ENCODE measurements at regions of chr3 and their contacts with region 1.

Region 1: DNA sequence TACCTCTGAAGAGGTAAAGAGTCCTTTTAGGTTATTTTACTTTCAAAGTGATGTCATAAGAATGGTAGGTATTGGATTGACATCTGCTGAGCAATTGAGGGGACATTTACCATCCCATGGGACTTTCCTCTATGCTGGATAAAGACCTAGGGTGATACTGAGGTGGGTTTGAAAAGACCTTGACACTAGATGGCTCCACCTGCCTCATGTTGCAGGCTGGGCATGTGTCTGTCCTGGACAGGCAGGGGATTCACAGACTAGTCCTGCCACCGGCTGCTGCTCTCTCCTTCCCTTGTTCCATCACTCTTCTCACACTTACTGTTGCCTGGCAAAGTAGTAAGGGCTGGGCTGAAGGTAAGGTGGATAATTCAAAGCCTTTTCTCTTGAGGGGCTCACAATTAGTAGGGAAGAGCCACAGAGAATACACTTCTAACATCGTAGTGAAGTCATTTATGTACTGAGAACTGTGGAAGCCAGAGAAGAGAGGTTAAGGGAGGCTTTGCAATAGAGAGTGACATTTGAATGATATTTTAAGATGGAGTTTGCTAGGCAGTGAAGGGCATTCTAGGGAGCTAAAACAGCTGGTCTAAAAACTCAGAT is 27.7 kb downstream of the TRAK1 start:
- DNase-seq: peak in 1 of 2 experiments; percentile 19
- H3K4me3 ChIP-seq: no peak overlapping the region
- H3K27ac ChIP-seq: no peak overlapping the region
- H3K4me1 ChIP-seq: peaks cover 2 to 5% (median 4%) of the 10 kb centered on the region in 4 experiments; a peak in 6 of 7 replicates
- H3K27me3 ChIP-seq: no peaks in the 10 kb centered on the region
- CTCF ChIP-seq: peak; percentile 74 to 83 (median 78)
- EP300 ChIP-seq: no peak
- POLR2A ChIP-seq: no peak
- RAD21 ChIP-seq: peak; percentile 82 to 86

Region 2: DNA sequence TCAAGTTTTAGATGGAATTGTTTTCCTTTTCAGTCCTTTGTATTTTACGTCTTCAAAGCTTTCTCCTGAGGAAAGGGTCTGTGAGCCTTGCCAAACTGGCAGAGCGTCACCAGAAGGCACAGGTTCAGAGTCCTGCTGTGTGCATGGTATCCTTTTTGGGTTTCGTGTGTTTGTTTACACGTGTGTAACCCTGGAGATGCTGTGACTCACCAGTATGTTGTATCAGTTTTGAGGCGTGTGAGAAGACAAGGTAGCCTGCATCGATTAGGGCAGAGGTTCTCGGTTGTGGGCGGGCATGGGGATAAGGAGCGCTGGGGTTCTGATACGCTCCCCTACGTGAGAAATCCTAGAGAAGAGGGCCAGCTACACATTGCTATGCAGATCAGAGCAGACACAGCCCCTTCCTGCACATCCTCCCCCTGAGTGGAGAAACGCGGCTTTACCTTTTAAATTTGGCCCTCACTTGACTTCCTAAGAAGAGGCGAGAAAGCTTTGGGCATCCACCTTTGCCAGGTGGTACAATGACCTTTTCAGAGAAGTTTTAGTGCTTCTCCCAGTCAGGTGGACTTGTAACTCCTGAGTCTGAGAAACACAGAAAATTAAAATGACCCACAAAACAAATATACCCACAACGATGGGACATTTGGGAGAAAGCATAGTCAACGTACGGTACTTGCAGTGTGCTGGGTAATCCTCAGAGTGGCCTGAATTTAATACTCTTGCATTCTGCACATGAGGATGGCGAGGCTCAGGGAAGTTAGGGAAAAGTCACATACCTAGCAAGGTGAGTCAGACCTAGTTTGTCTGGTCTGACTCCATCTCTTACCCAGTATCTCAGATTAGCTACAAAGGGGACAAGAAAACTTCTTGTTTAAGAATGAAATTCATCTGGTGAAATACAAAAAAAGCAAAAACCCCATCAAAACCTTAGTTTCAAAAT is 10.4 kb after region 1 on chr3:
- CTCF ChIA-PET with region 1: interaction called, 28 read pairs
- POLR2A ChIA-PET with region 1: interaction called, 3 read pairs
- DNase-seq: no peak
- H3K4me3 ChIP-seq: no peak overlapping the region
- H3K27ac ChIP-seq: no peak overlapping the region
- H3K4me1 ChIP-seq: peaks cover 0 to 5% (median 2%) of the 10 kb centered on the region in 4 experiments; a peak in 2 of 7 replicates
- H3K27me3 ChIP-seq: no peaks in the 10 kb centered on the region
- CTCF ChIP-seq: no peak
- EP300 ChIP-seq: no peak
- POLR2A ChIP-seq: no peak
- RAD21 ChIP-seq: no peak

Region 3: GRCh38 chr3:42134877-42135464 is 16.1 kb after region 1 on chr3:
- CTCF ChIA-PET with region 1: interaction called, 28 read pairs
- POLR2A ChIA-PET with region 1: interaction called, 3 read pairs
- DNase-seq: no peak
- H3K4me3 ChIP-seq: no peak overlapping the region
- H3K27ac ChIP-seq: no peak overlapping the region
- H3K4me1 ChIP-seq: peaks cover 0 to 5% (median 0%) of the 10 kb centered on the region in 4 experiments; a peak in 1 of 7 replicates
- H3K27me3 ChIP-seq: no peaks in the 10 kb centered on the region
- CTCF ChIP-seq: no peak
- EP300 ChIP-seq: no peak
- POLR2A ChIP-seq: no peak
- RAD21 ChIP-seq: no peak

Region 4: GRCh38 chr3:42144209-42144608 is 25.3 kb after region 1 on chr3:
- CTCF ChIA-PET with region 1: interaction called, 12 read pairs
- POLR2A ChIA-PET with region 1: no interaction called
- DNase-seq: no peak
- H3K4me3 ChIP-seq: no peak overlapping the region
- H3K27ac ChIP-seq: no peak overlapping the region
- H3K4me1 ChIP-seq: no peaks in the 10 kb centered on the region
- H3K27me3 ChIP-seq: no peaks in the 10 kb centered on the region
- CTCF ChIP-seq: no peak
- EP300 ChIP-seq: no peak
- POLR2A ChIP-seq: no peak
- RAD21 ChIP-seq: no peak

Region 5: DNA sequence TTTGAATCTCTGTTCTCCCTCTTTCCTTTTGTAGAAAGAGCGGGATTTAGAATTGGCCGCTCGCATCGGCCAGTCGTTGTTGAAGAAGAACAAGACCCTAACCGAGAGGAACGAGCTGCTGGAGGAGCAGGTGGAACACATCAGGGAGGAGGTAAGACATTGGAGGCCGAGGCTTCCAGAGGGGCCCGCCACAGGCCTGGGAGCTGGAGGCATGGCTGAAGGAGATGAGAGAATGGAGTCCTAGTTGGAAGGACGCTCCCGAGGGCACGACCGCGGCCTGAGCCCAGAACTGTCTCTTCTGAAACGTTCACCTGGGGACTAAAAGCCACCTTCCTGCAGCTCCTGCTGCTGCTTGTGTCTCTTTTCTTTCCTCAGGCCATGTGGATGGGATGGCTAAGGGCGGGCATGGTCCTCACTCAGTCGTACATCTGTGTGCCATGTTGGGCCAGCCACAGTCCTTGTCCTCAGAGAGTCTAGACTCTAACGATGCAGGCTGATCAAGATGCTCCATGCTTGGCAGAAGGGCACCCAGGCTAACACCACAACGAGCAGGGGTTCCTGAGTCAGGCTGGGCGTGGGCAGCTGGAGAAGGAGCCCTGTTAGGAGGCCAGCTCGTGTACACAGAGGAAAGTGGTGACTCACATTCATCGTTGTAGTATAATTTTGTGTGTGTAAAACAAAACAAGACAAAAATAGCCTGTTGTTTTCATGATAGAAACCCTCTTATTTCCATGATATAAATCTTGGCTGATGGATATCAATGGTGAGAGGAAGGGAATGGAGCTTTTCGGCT is 66.0 kb after region 1 on chr3:
- CTCF ChIA-PET with region 1: interaction called, 249 read pairs
- POLR2A ChIA-PET with region 1: no interaction called
- DNase-seq: no peak
- H3K4me3 ChIP-seq: no peak overlapping the region
- H3K27ac ChIP-seq: no peak overlapping the region
- H3K4me1 ChIP-seq: peaks cover 0 to 6% (median 4%) of the 10 kb centered on the region in 4 experiments; a peak in 5 of 7 replicates
- H3K27me3 ChIP-seq: no peaks in the 10 kb centered on the region
- CTCF ChIP-seq: no peak
- EP300 ChIP-seq: no peak
- POLR2A ChIP-seq: no peak
- RAD21 ChIP-seq: no peak

Region 6: GRCh38 chr3:42195879-42196330 is 77.0 kb after region 1 on chr3:
- CTCF ChIA-PET with region 1: interaction called, 249 read pairs
- POLR2A ChIA-PET with region 1: no interaction called
- DNase-seq: no peak
- H3K4me3 ChIP-seq: no peak overlapping the region
- H3K27ac ChIP-seq: no peak overlapping the region
- H3K4me1 ChIP-seq: peaks cover 0 to 3% (median 0%) of the 10 kb centered on the region in 4 experiments; a peak in 3 of 7 replicates
- H3K27me3 ChIP-seq: no peaks in the 10 kb centered on the region
- CTCF ChIP-seq: no peak
- EP300 ChIP-seq: no peak
- POLR2A ChIP-seq: no peak
- RAD21 ChIP-seq: no peak

Region 7: DNA sequence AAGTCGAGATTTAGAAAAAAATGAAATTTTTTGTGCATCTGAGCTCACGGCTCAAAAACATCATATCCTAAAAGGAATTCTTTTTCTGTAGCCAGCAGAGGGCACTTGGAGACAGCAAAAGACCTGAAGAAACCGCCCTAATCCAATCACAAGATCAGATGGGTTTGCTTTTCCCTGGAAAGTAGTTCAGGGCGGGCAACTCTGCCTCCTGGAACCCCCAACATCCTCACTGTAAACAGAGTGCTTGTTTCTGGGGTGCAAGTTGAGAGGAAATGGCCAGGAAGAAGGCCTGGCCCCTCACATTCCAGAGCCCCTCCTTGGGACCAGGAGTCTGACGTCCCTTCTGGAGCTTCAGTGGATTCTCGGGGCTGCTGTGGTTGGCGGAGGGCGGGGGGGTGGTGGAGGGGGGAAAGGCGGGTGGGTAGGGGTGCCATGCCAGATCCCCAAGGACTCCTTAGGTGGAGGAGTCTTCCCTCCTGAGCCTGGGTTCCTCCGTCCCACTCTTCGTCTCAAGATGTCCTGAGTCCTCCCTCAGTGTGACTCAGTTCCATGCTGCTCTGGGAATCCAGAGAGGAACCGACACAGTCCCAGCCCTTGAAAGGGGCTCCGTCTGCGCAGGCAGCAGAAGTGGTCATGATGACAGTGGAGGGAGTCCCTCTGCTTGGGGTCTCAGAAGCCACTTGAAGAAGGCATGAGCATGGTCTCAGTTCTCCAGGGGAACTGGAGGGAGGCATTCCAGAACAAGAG is 111.3 kb after region 1 on chr3:
- CTCF ChIA-PET with region 1: interaction called, 15 read pairs
- POLR2A ChIA-PET with region 1: no interaction called
- DNase-seq: no peak
- H3K4me3 ChIP-seq: no peak overlapping the region
- H3K27ac ChIP-seq: no peak overlapping the region
- H3K4me1 ChIP-seq: 0 out of 7 replicates have a peak, but pooled peaks cover 0 to 4% (median 0%) of the 10 kb centered on the region in 4 experiments
- H3K27me3 ChIP-seq: no peaks in the 10 kb centered on the region; a peak in 1 of 7 replicates
- CTCF ChIP-seq: peak in 2 of 3 experiments; percentile 61 to 67; a peak in 3 of 4 replicates
- EP300 ChIP-seq: no peak
- POLR2A ChIP-seq: no peak
- RAD21 ChIP-seq: peak; percentile 86 to 88

Measured in H1 (cell line).